Esophagus muscularis mucosa (tissue), 4 donors: ENCODE measurements at regions of chr9 and their contacts with region 1.

Region 1: DNA sequence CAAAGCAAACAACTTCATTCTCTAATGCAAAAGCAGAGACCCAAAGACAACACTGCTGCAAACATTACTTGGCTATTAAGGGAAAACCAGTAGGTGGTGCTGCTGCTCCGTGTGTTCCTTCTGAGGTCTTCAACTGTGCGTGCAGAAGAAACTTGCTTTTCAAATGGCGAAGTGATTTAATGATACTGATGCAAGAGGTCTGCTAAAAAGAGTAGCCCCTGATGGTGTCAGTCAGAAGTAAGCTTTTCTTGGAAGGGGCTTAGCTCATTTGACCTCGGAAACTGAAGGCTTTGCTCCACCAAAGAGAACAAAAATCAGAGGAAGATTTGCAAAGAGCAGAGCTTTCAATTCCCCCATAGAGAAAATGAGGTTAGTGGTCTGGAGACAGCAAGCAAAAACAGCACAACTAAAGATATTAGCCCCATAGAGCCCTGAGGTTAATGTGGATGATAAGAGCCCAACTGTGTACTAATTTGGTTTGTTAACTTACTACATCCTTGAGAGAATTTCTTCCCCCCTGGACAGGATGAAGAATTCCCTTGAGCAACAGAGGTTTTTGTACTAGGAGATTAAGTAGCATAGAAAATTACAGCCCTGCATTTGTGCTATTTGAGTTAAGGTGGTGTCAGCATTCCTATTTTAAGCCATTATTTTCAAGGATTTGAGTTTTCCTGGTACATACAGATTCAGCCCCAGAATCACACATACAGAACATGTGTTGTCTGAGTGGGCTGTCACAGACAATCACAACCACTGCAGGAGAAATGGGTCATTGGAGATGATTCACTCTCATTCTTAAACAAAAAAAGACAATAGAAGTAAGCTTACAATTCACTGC is 153.2 kb upstream of the C9orf72 start:
- DNase-seq: no peak
- H3K4me3 ChIP-seq: peak overlapping the region in 1 of 4 donors; percentile 18
- H3K27ac ChIP-seq: no peak overlapping the region
- H3K4me1 ChIP-seq: peaks cover 0 to 9% (median 7%) of the 10 kb centered on the region in 4 donors
- H3K27me3 ChIP-seq: no peaks in the 10 kb centered on the region
- CTCF ChIP-seq: peak; percentile 71 to 86 (median 73)
- EP300 ChIP-seq: no peak
- POLR2A ChIP-seq: no peak

Region 2: DNA sequence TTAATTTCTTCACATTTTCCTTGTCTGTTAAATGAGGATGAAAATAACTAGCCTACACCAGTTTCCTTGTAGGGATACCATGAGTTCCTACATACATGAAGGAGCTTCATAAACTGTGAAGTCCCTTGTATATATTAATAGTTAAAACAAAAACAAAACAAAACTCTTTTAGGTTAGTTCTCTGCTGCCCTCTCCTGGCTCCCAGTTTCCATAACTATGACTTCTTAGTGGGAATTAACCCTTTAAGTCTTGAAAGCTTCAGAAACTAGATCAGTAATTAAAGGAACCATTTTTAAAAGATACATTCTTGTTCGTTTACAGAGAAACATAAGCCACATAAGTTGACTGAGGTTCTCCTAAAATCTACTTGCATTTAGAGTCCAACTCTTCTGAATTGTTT is 346.8 kb after region 1 on chr9:
- intact Hi-C with region 1: loop called (anchors 5 kb)
- DNase-seq: no peak
- H3K4me3 ChIP-seq: no peak overlapping the region
- H3K27ac ChIP-seq: no peak overlapping the region
- H3K4me1 ChIP-seq: no peaks in the 10 kb centered on the region
- H3K27me3 ChIP-seq: no peaks in the 10 kb centered on the region
- CTCF ChIP-seq: peak; percentile 39 to 56 (median 53)
- EP300 ChIP-seq: no peak
- POLR2A ChIP-seq: no peak